ENCODE measurements at regions of chr2 and their contacts with region 1.

Region 1: DNA sequence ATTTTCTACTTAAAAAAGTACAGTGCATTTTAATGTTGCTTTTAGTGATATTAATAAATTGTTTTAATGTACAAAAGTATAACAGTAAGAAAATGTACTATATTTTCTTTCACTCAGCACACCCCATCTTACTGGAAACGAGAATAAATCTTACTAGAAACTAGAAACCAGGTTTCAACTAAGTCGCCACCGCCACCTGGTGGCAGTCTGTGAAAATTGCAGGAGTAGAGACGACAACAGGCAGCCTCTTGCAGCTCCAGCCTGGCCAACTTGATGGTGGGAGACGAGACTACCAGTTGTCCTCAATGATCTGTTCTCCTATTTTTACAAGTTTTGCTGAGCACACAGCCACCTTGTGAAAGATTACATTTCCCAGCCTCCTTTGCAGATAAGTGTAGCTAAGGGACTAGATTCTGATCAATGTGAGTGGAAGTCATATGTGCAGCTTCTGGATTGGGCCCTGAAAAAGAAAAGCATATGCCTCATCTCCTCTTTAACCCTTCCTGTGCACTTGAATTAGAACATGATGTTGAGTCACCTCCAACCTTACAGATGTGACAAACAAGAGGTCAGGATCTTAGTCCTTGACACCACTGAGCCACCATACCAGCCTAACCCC is 8.7 kb downstream of the OTOF start:
- DNase-seq: peak; percentile 73
- ATAC-seq: peak; percentile 21; the same call in 2 of the 3 replicates
- H3K4me3 ChIP-seq: no peak overlapping the region
- H3K27ac ChIP-seq: no peak overlapping the region
- H3K4me1 ChIP-seq: peaks cover 1% of the 10 kb centered on the region; the same call in 1 of the 2 replicates
- H3K27me3 ChIP-seq: peaks cover 0 to 3% of the 10 kb centered on the region in 2 experiments; a peak in 1 of 5 replicates
- CTCF ChIP-seq: peak; percentile 90
- EP300 ChIP-seq: no peak
- POLR2A ChIP-seq: no peak
- RAD21 ChIP-seq: peak; percentile 86

Region 2: GRCh38 chr2:25951071-25951547 is 518.1 kb before region 1 on chr2:
- CTCF ChIA-PET with region 1: interaction called, 4 read pairs
- POLR2A ChIA-PET with region 1: no interaction called
- in situ Hi-C with region 1: no loop called
- intact Hi-C with region 1: loop called (anchors 10 kb)
- DNase-seq: peak; percentile 83
- ATAC-seq: peak; percentile 85
- H3K4me3 ChIP-seq: peak overlapping the region in 1 of 3 experiments; percentile 14; a peak in 1 of 6 replicates
- H3K27ac ChIP-seq: no peak overlapping the region
- H3K4me1 ChIP-seq: peaks cover 39% of the 10 kb centered on the region
- H3K27me3 ChIP-seq: no peaks in the 10 kb centered on the region
- CTCF ChIP-seq: peak; percentile 98
- EP300 ChIP-seq: 0 out of 4 replicates have a peak, but pooled peaks of 1 of the 2 experiments have one; percentile 15
- POLR2A ChIP-seq: no peak
- RAD21 ChIP-seq: peak; percentile 98

Region 3: DNA sequence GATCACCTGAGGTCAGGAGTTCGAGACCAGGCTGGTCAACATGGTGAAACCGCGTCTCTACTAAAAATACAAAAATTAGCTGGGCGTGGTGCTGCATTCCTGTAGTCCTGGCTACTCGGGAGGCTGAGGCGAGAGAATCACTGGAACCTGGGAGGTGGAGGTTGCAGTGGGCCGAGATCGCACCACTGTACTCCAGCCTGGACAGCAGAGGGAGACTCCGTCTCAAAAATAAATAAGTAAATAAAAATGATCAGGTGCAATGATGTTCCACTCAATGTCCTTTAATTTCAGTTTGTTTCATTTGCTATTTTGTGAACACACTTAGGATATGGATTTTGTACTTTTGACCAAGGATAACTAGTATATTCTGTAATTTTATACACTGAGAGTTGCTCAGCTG is 234.1 kb before region 1 on chr2:
- CTCF ChIA-PET with region 1: interaction called, 5 read pairs
- POLR2A ChIA-PET with region 1: no interaction called
- in situ Hi-C with region 1: loop called (anchors 10 kb)
- intact Hi-C with region 1: loop called (anchors 1 kb)
- DNase-seq: peak; percentile 24
- ATAC-seq: peak; percentile 41; the same call in 1 of the 3 replicates
- H3K4me3 ChIP-seq: no peak overlapping the region
- H3K27ac ChIP-seq: no peak overlapping the region
- H3K4me1 ChIP-seq: peaks cover 25% of the 10 kb centered on the region
- H3K27me3 ChIP-seq: no peaks in the 10 kb centered on the region
- CTCF ChIP-seq: peak; percentile 58
- EP300 ChIP-seq: no peak
- POLR2A ChIP-seq: no peak
- RAD21 ChIP-seq: peak; percentile 65

Region 4: DNA sequence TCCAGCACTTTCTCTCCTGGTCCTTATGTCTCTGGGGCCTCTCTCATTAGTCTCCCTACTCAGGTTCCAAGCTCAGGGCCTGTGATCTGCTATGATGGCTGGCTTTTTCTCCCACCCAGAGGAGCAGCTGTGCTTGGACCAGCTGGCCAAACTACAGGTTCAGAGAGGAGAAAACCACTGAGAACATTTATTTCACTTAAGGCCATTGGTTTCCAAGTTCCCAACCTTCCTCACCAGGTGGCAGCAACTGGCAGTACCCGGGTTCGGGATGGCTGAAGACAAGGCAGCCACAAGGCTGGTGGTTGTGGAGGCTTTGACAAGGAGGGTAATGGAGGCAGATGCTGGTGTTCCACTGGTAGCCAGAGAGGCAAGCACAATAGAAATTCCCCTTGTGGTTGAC is 153.2 kb before region 1 on chr2:
- CTCF ChIA-PET with region 1: interaction called, 8 read pairs
- POLR2A ChIA-PET with region 1: interaction called, 3 read pairs
- in situ Hi-C with region 1: loop called (anchors 5 kb)
- intact Hi-C with region 1: loop called (anchors 2 kb)
- DNase-seq: peak; percentile 35
- ATAC-seq: peak; percentile 30; the same call in 2 of the 3 replicates
- H3K4me3 ChIP-seq: no peak overlapping the region
- H3K27ac ChIP-seq: no peak overlapping the region
- H3K4me1 ChIP-seq: no peaks in the 10 kb centered on the region
- H3K27me3 ChIP-seq: peaks cover 10 to 69% of the 10 kb centered on the region in 2 experiments; a peak in 4 of 5 replicates
- CTCF ChIP-seq: peak; percentile 66
- EP300 ChIP-seq: no peak
- POLR2A ChIP-seq: no peak
- RAD21 ChIP-seq: 0 out of 2 replicates have a peak, but pooled peaks have one; percentile 36

Region 5: DNA sequence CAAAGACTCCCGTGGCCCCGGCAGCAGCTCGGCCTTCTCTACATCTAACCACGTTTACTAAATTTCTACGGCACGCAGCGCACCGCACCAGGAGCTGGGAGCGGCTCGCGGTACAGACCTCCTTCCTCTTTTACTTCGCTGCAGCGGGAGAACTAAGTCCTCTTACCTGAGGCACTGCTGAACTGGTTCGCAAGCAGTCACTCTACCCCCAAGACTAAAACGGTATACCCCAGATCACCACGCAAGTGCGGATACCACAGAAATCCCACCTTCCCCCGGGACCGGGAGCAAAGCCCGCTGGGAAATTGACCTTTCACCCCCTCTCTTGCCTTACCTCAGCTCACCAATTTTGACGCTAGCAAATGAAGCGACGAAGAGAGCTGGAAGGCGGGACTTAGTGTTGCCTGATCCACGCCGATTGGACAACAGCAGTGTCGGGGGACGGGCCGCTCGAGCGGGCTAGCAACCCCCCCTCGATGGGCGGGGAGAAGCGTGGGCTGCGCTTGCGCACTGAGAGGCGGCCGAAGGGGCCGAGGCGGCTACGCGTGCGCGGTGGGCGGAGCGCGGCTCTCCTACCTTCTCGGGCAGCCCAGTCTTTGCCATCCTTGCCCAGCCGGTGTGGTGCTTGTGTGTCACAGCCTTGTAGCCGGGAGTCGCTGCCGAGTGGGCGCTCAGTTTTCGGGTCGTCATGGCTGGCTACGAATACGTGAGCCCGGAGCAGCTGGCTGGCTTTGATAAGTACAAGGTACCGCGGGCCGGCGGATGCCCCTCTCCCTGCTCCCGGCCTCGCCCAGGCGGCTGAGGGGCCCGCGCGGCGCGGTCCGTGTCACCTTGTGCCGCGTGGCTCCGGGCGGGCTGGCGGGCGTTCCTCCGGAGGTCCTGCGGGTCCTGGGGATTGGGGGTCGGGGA is 123.4 kb before region 1 on chr2 and contains the start of gene SELENOI:
- CTCF ChIA-PET with region 1: no interaction called
- POLR2A ChIA-PET with region 1: interaction called, 3 read pairs
- in situ Hi-C with region 1: no loop called
- intact Hi-C with region 1: loop called (anchors 5 kb)
- DNase-seq: peak; percentile 100
- ATAC-seq: peak; percentile 95
- H3K4me3 ChIP-seq: peak within 1 kb of the TSS; percentile 89 to 96 (median 94)
- H3K27ac ChIP-seq: peak within 1 kb of the TSS; percentile 97
- H3K4me1 ChIP-seq: peaks cover 63% of the 10 kb centered on the region
- H3K27me3 ChIP-seq: no peaks in the 10 kb centered on the region; a peak in 1 of 5 replicates
- CTCF ChIP-seq: no peak; the same call in 1 of the 2 replicates
- EP300 ChIP-seq: peak; percentile 46 to 56; a peak in 3 of 4 replicates
- POLR2A ChIP-seq: peak; percentile 94 to 99
- RAD21 ChIP-seq: peak; percentile 33; the same call in 1 of the 2 replicates
- total RNA-seq, gene SELENOI: 60.3 and 66.0 TPM in 2 replicates

Region 6: DNA sequence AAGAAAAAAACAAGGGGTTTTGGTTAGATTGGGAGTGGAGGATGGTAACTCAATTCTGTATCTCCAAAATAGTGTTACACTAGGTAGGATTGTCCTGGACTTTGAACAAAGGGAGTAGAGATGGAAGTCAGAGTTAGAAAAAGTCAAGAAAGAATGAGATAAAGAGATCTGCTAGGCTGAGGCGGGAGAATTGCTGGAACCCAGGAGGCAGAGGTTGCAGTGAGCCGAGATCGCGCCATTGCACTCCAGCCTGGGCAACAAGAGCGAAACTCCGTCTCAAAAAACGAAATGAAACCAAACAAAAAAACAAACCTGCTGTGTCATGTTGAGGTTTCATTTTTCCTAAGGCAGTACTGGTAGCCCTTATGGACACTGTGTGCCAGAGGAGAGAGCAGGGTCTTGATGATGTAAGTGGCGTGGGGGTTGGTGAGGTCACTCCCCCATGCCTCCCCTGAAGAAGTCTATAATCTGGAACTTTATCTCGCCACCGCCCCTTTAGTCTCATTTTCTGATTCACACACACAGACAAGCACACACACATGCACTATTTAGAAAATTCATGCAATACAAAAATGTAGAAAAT is 57.0 kb before region 1 on chr2:
- CTCF ChIA-PET with region 1: no interaction called
- POLR2A ChIA-PET with region 1: no interaction called
- in situ Hi-C with region 1: no loop called
- intact Hi-C with region 1: no loop called
- DNase-seq: peak; percentile 45
- ATAC-seq: peak; percentile 45
- H3K4me3 ChIP-seq: peak overlapping the region; percentile 36 to 49 (median 39); a peak in 5 of 6 replicates
- H3K27ac ChIP-seq: no peak overlapping the region
- H3K4me1 ChIP-seq: peaks cover 21% of the 10 kb centered on the region
- H3K27me3 ChIP-seq: no peaks in the 10 kb centered on the region
- CTCF ChIP-seq: no peak
- EP300 ChIP-seq: no peak
- POLR2A ChIP-seq: no peak
- RAD21 ChIP-seq: no peak

Region 7: GRCh38 chr2:26456440-26457250 is 12.6 kb before region 1 on chr2:
- CTCF ChIA-PET with region 1: no interaction called
- POLR2A ChIA-PET with region 1: interaction called, 14 read pairs
- in situ Hi-C with region 1: no loop called
- intact Hi-C with region 1: no loop called
- DNase-seq: peak; percentile 82
- ATAC-seq: peak; percentile 85
- H3K4me3 ChIP-seq: peak overlapping the region; percentile 46 to 76 (median 50)
- H3K27ac ChIP-seq: peak overlapping the region; percentile 69
- H3K4me1 ChIP-seq: peaks cover 43% of the 10 kb centered on the region
- H3K27me3 ChIP-seq: no peaks in the 10 kb centered on the region; a peak in 1 of 5 replicates
- CTCF ChIP-seq: 0 out of 2 replicates have a peak, but pooled peaks have one; percentile 2
- EP300 ChIP-seq: peak; percentile 49 to 67; a peak in 2 of 4 replicates
- POLR2A ChIP-seq: peak in 1 of 2 experiments; percentile 29; a peak in 1 of 4 replicates
- RAD21 ChIP-seq: no peak

Region 8: GRCh38 chr2:26483957-26484565 is 14.9 kb after region 1 on chr2:
- CTCF ChIA-PET with region 1: no interaction called
- POLR2A ChIA-PET with region 1: no interaction called
- in situ Hi-C with region 1: no loop called
- intact Hi-C with region 1: no loop called
- DNase-seq: no peak
- ATAC-seq: peak; percentile 28
- H3K4me3 ChIP-seq: no peak overlapping the region
- H3K27ac ChIP-seq: no peak overlapping the region
- H3K4me1 ChIP-seq: peaks cover 40% of the 10 kb centered on the region
- H3K27me3 ChIP-seq: peaks cover 0 to 50% of the 10 kb centered on the region in 2 experiments; a peak in 3 of 5 replicates
- CTCF ChIP-seq: no peak
- EP300 ChIP-seq: no peak
- POLR2A ChIP-seq: no peak
- RAD21 ChIP-seq: no peak

Region 9: DNA sequence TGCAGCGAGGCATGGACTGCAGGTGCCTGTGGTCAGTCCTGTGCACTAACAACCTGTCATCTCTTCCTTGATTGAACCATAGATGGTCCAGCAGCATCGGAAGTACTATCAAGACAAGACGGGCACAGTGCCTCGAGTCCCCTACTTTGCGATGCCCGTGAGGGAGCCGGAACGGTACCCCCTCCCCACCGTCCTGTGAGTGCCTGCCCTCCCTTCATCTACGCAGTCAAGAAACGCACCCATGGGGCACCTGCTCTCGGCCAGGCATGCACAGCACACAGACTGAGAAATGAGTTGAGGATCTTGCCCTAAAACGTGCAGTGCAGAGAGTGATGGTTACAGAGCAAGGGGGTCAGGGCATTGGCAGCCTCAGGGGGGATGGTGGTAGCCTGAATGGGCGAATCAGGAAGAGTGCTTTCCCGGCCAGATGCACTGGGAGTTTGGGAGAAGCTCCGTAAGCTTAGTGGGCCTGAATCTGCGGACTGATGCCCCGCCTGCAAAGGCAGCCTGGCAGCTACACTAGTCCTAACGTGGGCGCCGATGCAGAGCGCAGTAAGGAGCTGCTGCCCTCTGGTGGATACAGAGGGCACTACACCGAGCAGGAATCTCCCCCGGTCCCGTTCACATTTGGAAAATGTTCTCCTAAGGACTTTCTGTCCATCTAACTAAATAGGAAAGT is 108.4 kb after region 1 on chr2:
- CTCF ChIA-PET with region 1: interaction called, 10 read pairs
- POLR2A ChIA-PET with region 1: no interaction called
- in situ Hi-C with region 1: no loop called
- intact Hi-C with region 1: no loop called
- DNase-seq: peak; percentile 35
- ATAC-seq: peak; percentile 84
- H3K4me3 ChIP-seq: no peak overlapping the region
- H3K27ac ChIP-seq: no peak overlapping the region
- H3K4me1 ChIP-seq: no peaks in the 10 kb centered on the region
- H3K27me3 ChIP-seq: peaks cover 31 to 91% of the 10 kb centered on the region in 2 experiments; a peak in 4 of 5 replicates
- CTCF ChIP-seq: peak; percentile 94
- EP300 ChIP-seq: no peak
- POLR2A ChIP-seq: no peak
- RAD21 ChIP-seq: peak; percentile 88

Measured in HepG2 (cell line).